SK-N-SH (cell line): ENCODE measurements at regions of chr6 and their contacts with region 1.

Region 1: GRCh38 chr6:136226027-136226673 is 24.0 kb downstream of the MTFR2 start:
- DNase-seq: peak; percentile 69
- H3K4me3 ChIP-seq: peak overlapping the region in 1 of 2 experiments; percentile 54; a peak in 1 of 4 replicates
- H3K27ac ChIP-seq: no peak overlapping the region
- H3K4me1 ChIP-seq: no peaks in the 10 kb centered on the region; a peak in 1 of 4 replicates
- H3K27me3 ChIP-seq: no peaks in the 10 kb centered on the region
- CTCF ChIP-seq: peak; percentile 100
- EP300 ChIP-seq: no peak
- RAD21 ChIP-seq: peak; percentile 100

Region 2: DNA sequence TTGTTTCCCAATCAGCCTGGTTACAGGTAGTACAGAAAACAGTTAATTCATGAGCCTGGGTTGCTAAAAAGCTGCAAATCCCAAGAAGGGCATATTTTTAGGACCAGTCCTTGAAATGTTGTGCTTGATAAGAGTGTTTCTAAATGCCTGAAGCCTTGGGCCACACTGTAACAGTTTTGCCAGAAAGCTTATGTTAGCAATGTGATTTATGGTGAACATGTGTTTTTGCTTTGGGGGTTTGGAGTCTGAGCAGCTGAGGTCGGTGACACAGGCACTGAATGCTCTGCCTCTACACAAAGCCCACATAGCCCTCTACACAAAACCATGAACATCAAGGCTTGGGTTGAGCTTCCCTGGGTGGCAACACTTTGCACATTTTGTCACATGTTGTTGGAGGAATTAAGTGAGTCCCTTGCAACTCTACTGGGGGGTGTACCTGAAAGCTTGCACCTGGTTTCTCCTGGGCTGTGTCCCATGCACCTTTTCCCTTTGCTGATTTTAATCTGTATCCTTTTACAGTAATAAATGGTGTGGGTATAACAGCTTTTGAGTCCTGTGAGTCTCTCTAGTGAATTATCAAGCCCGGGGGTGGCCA is 750.8 kb before region 1 on chr6:
- CTCF ChIA-PET with region 1: interaction called, 14 read pairs
- POLR2A ChIA-PET with region 1: no interaction called
- DNase-seq: peak; percentile 62
- H3K4me3 ChIP-seq: no peak overlapping the region
- H3K27ac ChIP-seq: peak overlapping the region in 1 of 2 experiments; percentile 86; a peak in 2 of 4 replicates
- H3K4me1 ChIP-seq: peaks cover 0 to 8% of the 10 kb centered on the region in 2 experiments; a peak in 2 of 4 replicates
- H3K27me3 ChIP-seq: no peaks in the 10 kb centered on the region
- CTCF ChIP-seq: no peak
- EP300 ChIP-seq: peak in 1 of 2 experiments; percentile 73; a peak in 1 of 4 replicates
- RAD21 ChIP-seq: no peak

Region 3: DNA sequence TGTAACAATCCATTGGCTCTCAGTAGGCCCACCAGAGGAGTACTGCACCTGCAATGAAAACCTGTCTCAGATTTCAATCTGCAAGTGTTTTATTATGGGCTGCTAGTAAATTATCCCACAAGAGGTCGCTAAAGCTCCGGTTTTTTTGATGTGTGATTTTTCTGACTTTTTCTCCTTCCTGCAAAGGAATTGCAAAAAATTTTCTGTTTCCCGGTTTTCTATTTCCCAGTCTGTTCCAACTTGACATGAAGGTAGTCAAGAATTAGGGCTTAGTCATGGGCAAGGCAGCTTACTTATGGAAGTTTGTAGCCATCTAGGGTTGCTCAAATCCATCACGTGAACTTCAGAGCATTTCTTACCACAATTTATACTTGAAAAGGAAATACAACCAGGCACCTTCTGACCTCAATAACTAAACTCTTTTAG is 690.1 kb before region 1 on chr6:
- CTCF ChIA-PET with region 1: interaction called, 78 read pairs
- POLR2A ChIA-PET with region 1: no interaction called
- DNase-seq: peak; percentile 37
- H3K4me3 ChIP-seq: peak overlapping the region in 1 of 2 experiments; percentile 14; a peak in 1 of 4 replicates
- H3K27ac ChIP-seq: peak overlapping the region in 1 of 2 experiments; percentile 48; a peak in 2 of 4 replicates
- H3K4me1 ChIP-seq: peaks cover 0 to 5% of the 10 kb centered on the region in 2 experiments; a peak in 2 of 4 replicates
- H3K27me3 ChIP-seq: no peaks in the 10 kb centered on the region
- CTCF ChIP-seq: peak; percentile 74
- EP300 ChIP-seq: no peak
- RAD21 ChIP-seq: peak; percentile 84

Region 4: DNA sequence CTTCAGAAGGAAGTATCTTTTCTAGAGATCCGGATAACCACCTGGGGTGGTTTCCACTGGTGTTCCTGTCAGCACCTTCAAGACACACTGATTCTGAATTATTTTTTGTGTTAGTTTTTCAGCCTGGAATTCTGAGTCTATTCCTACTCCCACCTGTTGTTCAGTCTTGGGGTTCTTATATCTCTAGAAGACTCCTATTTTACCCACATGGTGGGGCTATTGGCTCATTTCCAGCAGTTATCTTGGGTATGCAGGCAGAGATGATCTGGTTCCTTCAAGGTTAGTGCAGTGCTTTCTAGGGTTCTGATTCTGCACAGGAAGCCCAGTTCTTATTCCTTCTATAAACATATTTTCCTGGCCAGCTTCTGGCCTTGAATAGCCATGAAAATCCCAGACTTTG is 550.3 kb before region 1 on chr6:
- CTCF ChIA-PET with region 1: interaction called, 37 read pairs
- POLR2A ChIA-PET with region 1: no interaction called
- DNase-seq: peak; percentile 39
- H3K4me3 ChIP-seq: no peak overlapping the region
- H3K27ac ChIP-seq: no peak overlapping the region
- H3K4me1 ChIP-seq: no peaks in the 10 kb centered on the region; a peak in 1 of 4 replicates
- H3K27me3 ChIP-seq: no peaks in the 10 kb centered on the region
- CTCF ChIP-seq: peak; percentile 46
- EP300 ChIP-seq: no peak
- RAD21 ChIP-seq: peak; percentile 78

Region 5: GRCh38 chr6:136037876-136038460 is 188.2 kb before region 1 on chr6:
- CTCF ChIA-PET with region 1: interaction called, 14 read pairs
- POLR2A ChIA-PET with region 1: no interaction called
- DNase-seq: peak; percentile 65
- H3K4me3 ChIP-seq: peak overlapping the region; percentile 48 to 58
- H3K27ac ChIP-seq: peak overlapping the region; percentile 94 to 96
- H3K4me1 ChIP-seq: peaks cover 18 to 37% of the 10 kb centered on the region in 2 experiments
- H3K27me3 ChIP-seq: no peaks in the 10 kb centered on the region
- CTCF ChIP-seq: peak; percentile 59
- EP300 ChIP-seq: peak; percentile 3 to 14; a peak in 1 of 4 replicates
- RAD21 ChIP-seq: peak; percentile 42

Region 6: GRCh38 chr6:136113736-136114173 is 112.4 kb before region 1 on chr6:
- CTCF ChIA-PET with region 1: interaction called, 17 read pairs
- POLR2A ChIA-PET with region 1: no interaction called
- DNase-seq: peak; percentile 66
- H3K4me3 ChIP-seq: no peak overlapping the region
- H3K27ac ChIP-seq: peak overlapping the region; percentile 65 to 100
- H3K4me1 ChIP-seq: peaks cover 4 to 51% of the 10 kb centered on the region in 2 experiments; a peak in 3 of 4 replicates
- H3K27me3 ChIP-seq: no peaks in the 10 kb centered on the region
- CTCF ChIP-seq: no peak
- EP300 ChIP-seq: peak in 1 of 2 experiments; percentile 78; a peak in 2 of 4 replicates
- RAD21 ChIP-seq: peak; percentile 35; the same call in 1 of the 2 replicates

Region 7: GRCh38 chr6:136153707-136154375 is 72.3 kb before region 1 on chr6:
- CTCF ChIA-PET with region 1: no interaction called
- POLR2A ChIA-PET with region 1: no interaction called
- DNase-seq: no peak
- H3K4me3 ChIP-seq: no peak overlapping the region
- H3K27ac ChIP-seq: no peak overlapping the region
- H3K4me1 ChIP-seq: no peaks in the 10 kb centered on the region; a peak in 1 of 4 replicates
- H3K27me3 ChIP-seq: no peaks in the 10 kb centered on the region
- CTCF ChIP-seq: no peak
- EP300 ChIP-seq: no peak
- RAD21 ChIP-seq: no peak

Region 8: DNA sequence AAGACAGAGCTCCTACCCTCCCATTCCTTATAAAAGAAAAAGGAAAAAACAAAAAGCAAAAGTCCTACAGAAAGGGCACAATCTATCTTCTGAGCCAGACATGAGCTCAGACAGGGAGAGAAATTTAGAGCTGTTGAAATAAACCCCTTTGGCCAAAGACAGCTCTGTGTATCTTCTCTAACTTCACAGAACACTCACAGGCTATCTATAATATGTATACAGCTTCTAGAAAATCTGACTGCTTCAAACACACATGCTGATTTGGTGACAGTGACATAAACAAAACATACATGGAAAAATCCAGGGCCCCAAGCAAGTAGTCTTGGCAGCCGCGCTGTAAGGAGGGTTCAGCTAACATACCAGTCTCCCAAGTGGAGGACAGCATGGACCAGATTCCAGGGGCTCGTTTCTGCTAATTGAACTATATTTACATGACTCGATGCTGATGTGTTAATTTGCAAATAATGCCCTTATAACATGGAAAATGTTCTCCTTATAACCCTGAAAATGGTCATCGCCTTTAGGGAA is 13.1 kb before region 1 on chr6:
- CTCF ChIA-PET with region 1: interaction called, 24 read pairs
- POLR2A ChIA-PET with region 1: no interaction called
- DNase-seq: no peak
- H3K4me3 ChIP-seq: no peak overlapping the region
- H3K27ac ChIP-seq: no peak overlapping the region
- H3K4me1 ChIP-seq: no peaks in the 10 kb centered on the region
- H3K27me3 ChIP-seq: no peaks in the 10 kb centered on the region
- CTCF ChIP-seq: no peak
- EP300 ChIP-seq: no peak
- RAD21 ChIP-seq: no peak